ENCODE measurements at regions of chr6 and their contacts with region 1.

Region 1: DNA sequence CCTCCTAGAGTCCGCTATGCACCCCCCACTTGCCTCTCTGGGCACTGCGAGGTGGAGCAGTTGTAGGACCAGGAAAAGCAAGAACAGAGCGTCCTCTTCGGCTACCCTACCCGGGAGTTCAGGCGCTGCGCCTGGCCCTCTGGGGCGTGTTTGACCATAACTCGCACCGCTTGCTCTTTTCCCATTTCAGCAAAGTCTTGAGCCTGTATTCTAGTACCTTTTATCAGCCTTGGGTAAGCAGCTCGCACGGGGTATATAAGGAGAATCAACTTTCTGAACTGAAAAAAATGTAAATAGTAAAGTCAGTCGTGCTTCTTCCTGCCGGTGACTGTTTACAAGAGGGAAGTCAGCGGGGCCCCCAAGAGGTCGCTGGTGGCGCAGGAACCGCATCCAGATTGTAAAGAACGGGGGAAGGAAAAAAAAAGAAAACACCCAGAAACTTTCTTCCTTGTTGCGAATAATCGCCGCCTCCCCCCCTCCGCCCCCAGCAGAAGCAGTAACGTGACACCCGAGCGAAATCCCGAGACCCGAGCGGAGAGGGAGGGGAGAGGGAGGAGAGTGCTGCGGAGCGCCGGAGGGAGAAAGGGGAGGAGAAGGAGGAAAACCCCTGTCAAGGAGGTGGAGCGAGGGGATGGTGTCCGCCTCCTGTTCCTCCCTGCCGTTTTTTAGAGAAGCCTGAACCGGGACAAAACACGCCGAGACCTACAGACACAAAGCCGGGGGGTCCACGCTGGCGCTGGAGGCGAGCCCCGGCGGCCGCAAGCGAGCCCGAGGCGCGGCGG is at the start of gene UST:
- DNase-seq: peak; percentile 55
- ATAC-seq: peak; percentile 47
- H3K4me3 Mint-ChIP-seq: peak within 1 kb of the TSS; percentile 95
- H3K27ac Mint-ChIP-seq: peak within 1 kb of the TSS; percentile 94
- H3K4me1 Mint-ChIP-seq: peaks cover 42% of the 10 kb centered on the region
- H3K27me3 Mint-ChIP-seq: no peaks in the 10 kb centered on the region
- CTCF ChIP-seq: no peak
- total RNA-seq, gene UST: 14.3 and 18.1 TPM in 2 replicates

Region 2: DNA sequence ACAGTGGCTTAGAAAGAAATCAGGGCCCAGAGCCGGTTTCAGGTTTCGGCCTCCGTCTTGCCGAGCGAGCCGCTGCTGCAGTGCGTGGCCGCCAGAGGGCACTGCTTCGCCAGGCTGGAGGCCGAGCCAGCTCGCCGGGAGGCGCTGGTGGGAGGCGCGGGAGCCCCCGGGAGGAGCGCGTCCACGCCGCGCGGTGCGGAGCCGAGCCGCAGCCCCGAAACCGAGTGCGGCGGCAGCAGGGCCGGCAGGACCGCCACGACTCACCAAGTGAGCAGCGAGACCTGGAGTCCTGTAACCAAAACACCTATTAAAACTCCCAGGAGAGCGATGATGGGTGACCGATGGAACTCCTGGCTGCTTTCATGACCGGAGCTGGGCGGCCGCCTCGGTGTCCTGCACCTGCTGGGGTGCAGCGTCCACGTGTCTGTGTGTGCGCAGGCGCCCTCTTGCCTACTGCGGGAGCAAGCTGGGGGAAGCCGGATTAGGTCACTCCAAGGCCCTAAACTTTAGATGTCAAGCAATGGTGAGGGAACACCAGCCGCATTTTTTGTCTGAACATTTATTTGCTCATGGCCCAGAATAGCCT is 186.6 kb before region 1 on chr6:
- CTCF ChIA-PET with region 1: no interaction called
- POLR2A ChIA-PET with region 1: no interaction called
- intact Hi-C with region 1: loop called (anchors 1 kb)
- DNase-seq: peak; percentile 74
- ATAC-seq: peak; percentile 87
- H3K4me3 Mint-ChIP-seq: peak overlapping the region; percentile 57
- H3K27ac Mint-ChIP-seq: no peak overlapping the region
- H3K4me1 Mint-ChIP-seq: peaks cover 15% of the 10 kb centered on the region
- H3K27me3 Mint-ChIP-seq: peaks cover 9% of the 10 kb centered on the region
- CTCF ChIP-seq: peak; percentile 18

Region 3: DNA sequence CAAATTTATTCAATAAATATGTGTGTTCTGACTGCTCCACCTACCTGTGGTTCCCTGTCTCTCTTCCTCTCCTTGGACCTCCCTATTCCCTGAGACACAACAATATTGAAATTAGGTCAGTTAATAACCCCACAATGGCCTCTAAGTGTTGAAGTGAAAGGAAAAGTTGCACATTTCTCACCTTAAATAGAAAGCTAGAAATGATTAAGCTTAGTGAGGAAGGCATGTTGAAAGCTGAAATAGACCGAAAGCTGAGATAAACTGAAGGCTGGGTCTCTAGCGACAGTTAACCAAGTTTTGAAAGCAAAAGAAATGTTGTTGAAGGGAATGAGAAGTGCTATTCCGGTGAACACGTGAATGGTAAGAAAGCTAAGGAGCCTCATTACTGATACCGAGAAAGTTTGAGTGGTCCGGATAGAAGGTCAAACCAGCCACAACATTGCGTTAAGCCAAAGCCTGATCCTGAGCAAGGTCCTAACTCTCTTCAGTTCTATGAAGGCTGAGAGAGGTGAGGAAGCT is 34.4 kb after region 1 on chr6:
- CTCF ChIA-PET with region 1: interaction called, 8 read pairs
- POLR2A ChIA-PET with region 1: interaction called, 4 read pairs
- intact Hi-C with region 1: loop called (anchors 2 kb)
- DNase-seq: no peak
- ATAC-seq: peak; percentile 65
- H3K4me3 Mint-ChIP-seq: peak overlapping the region; percentile 56
- H3K27ac Mint-ChIP-seq: peak overlapping the region; percentile 69
- H3K4me1 Mint-ChIP-seq: peaks cover 54% of the 10 kb centered on the region
- H3K27me3 Mint-ChIP-seq: no peaks in the 10 kb centered on the region
- CTCF ChIP-seq: no peak

Region 4: GRCh38 chr6:148866657-148867268 is 120.2 kb after region 1 on chr6:
- CTCF ChIA-PET with region 1: interaction called, 3 read pairs
- POLR2A ChIA-PET with region 1: interaction called, 17 read pairs
- intact Hi-C with region 1: loop called (anchors 1 kb)
- DNase-seq: no peak
- ATAC-seq: peak; percentile 93
- H3K4me3 Mint-ChIP-seq: peak overlapping the region; percentile 72
- H3K27ac Mint-ChIP-seq: peak overlapping the region; percentile 92
- H3K4me1 Mint-ChIP-seq: peaks cover 84% of the 10 kb centered on the region
- H3K27me3 Mint-ChIP-seq: no peaks in the 10 kb centered on the region
- CTCF ChIP-seq: no peak

Region 5: GRCh38 chr6:148947621-148948444 is 201.3 kb after region 1 on chr6:
- CTCF ChIA-PET with region 1: interaction called, 4 read pairs
- POLR2A ChIA-PET with region 1: interaction called, 3 read pairs
- intact Hi-C with region 1: loop called (anchors 1 kb)
- DNase-seq: peak; percentile 61
- ATAC-seq: peak; percentile 96
- H3K4me3 Mint-ChIP-seq: no peak overlapping the region
- H3K27ac Mint-ChIP-seq: no peak overlapping the region
- H3K4me1 Mint-ChIP-seq: peaks cover 12% of the 10 kb centered on the region
- H3K27me3 Mint-ChIP-seq: no peaks in the 10 kb centered on the region
- CTCF ChIP-seq: peak; percentile 84